CD8-positive, alpha-beta memory T cell (primary cell): ENCODE measurements at regions of chr6 and their contacts with region 1.

Region 1: GRCh38 chr6:44265007-44265721 is at the start of gene NFKBIE:
- DNase-seq: peak; percentile 93 to 97 (median 96)
- H3K4me3 ChIP-seq: peak within 1 kb of the TSS; percentile 86
- H3K4me3 Mint-ChIP-seq: peak within 1 kb of the TSS; percentile 88 to 96 (median 91)
- H3K27ac ChIP-seq: peak within 1 kb of the TSS; percentile 93
- H3K27ac Mint-ChIP-seq: peak within 1 kb of the TSS; percentile 78 to 99 (median 98)
- H3K4me1 ChIP-seq: peaks cover 30% of the 10 kb centered on the region
- H3K4me1 Mint-ChIP-seq: peaks cover 45 to 51% (median 47%) of the 10 kb centered on the region in 3 donors
- H3K27me3 ChIP-seq: peaks cover 21% of the 10 kb centered on the region
- H3K27me3 Mint-ChIP-seq: peaks cover 17% of the 10 kb centered on the region in 2 donors
- total RNA-seq, gene NFKBIE: 33.1 to 34.3 TPM

Region 2: DNA sequence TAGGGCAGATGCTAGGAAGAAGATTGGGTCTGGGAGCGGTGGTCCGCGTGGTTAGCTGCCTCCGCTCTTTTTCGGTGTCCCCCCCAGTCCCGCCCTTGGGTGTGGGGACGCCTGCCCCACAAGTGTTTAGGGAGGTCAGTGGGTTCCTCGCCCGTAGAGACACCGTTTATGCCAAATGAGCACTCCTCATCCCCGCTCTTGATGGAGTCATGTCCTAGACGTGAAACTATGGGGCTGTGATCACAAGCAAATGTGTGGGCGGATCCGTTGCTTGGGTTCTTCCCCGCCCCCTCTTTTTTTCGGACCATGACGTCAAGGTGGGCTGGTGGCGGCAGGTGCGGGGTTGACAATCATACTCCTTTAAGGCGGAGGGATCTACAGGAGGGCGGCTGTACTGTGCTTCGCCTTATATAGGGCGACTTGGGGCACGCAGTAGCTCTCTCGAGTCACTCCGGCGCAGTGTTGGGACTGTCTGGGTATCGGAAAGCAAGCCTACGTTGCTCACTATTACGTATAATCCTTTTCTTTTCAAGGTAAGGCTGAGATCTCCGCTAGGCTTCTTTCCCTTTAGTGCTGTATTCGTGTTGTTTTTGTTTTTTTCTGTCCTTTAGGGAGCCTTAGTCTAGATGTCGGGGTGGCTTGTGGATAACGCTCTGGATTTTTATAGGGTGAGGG is 18.4 kb before region 1 on chr6 and contains the start of gene HSP90AB1:
- CTCF ChIA-PET with region 1: interaction called, 8 read pairs
- POLR2A ChIA-PET with region 1: interaction called, 23 read pairs
- DNase-seq: peak; percentile 87 to 98 (median 95)
- H3K4me3 ChIP-seq: peak within 1 kb of the TSS; percentile 98
- H3K4me3 Mint-ChIP-seq: peak within 1 kb of the TSS; percentile 91 to 99 (median 98)
- H3K27ac ChIP-seq: peak within 1 kb of the TSS; percentile 98
- H3K27ac Mint-ChIP-seq: peak within 1 kb of the TSS; percentile 91 to 99 (median 98)
- H3K4me1 ChIP-seq: peaks cover 23% of the 10 kb centered on the region
- H3K4me1 Mint-ChIP-seq: peaks cover 37 to 51% (median 47%) of the 10 kb centered on the region in 3 donors
- H3K27me3 ChIP-seq: no peaks in the 10 kb centered on the region
- H3K27me3 Mint-ChIP-seq: peaks cover 0 to 7% of the 10 kb centered on the region in 2 donors
- total RNA-seq, gene HSP90AB1: 2,387 to 2,400 TPM

Region 3: GRCh38 chr6:44304282-44305199 is 39.4 kb after region 1 on chr6:
- CTCF ChIA-PET with region 1: interaction called, 36 read pairs
- POLR2A ChIA-PET with region 1: no interaction called
- DNase-seq: peak; percentile 18 to 67 (median 36)
- H3K4me3 ChIP-seq: no peak overlapping the region
- H3K4me3 Mint-ChIP-seq: no peak overlapping the region
- H3K27ac ChIP-seq: no peak overlapping the region
- H3K27ac Mint-ChIP-seq: no peak overlapping the region
- H3K4me1 ChIP-seq: no peaks in the 10 kb centered on the region
- H3K4me1 Mint-ChIP-seq: no peaks in the 10 kb centered on the region
- H3K27me3 ChIP-seq: no peaks in the 10 kb centered on the region
- H3K27me3 Mint-ChIP-seq: no peaks in the 10 kb centered on the region

Region 4: GRCh38 chr6:44338228-44339122 is 73.3 kb after region 1 on chr6:
- CTCF ChIA-PET with region 1: interaction called, 41 read pairs
- POLR2A ChIA-PET with region 1: no interaction called
- DNase-seq: peak; percentile 37 to 75 (median 46)
- H3K4me3 ChIP-seq: no peak overlapping the region
- H3K4me3 Mint-ChIP-seq: no peak overlapping the region
- H3K27ac ChIP-seq: no peak overlapping the region
- H3K27ac Mint-ChIP-seq: no peak overlapping the region
- H3K4me1 ChIP-seq: no peaks in the 10 kb centered on the region
- H3K4me1 Mint-ChIP-seq: no peaks in the 10 kb centered on the region
- H3K27me3 ChIP-seq: peaks cover 11% of the 10 kb centered on the region
- H3K27me3 Mint-ChIP-seq: peaks cover 18 to 28% of the 10 kb centered on the region in 2 donors

Region 5: DNA sequence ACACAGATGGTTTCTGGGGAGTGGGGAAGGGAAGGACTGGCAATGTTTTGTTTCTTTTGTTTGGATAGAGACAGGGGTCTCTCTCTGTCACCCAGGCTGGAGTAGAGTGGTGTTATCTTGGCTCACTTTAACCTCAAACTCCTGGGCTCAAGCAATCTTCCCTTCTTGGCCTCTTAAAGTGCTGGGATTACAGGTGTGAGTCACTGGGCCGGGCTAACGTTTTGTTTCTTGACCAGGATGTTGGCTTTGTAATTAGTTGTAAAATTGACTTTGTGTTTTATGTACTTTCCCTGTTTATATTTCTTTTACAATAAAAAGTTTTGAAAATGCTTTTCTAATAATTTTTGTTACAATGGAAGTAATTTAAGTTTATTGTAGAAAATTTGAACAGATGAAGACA is 88.2 kb after region 1 on chr6:
- CTCF ChIA-PET with region 1: no interaction called
- POLR2A ChIA-PET with region 1: no interaction called
- DNase-seq: no peak
- H3K4me3 ChIP-seq: no peak overlapping the region
- H3K4me3 Mint-ChIP-seq: no peak overlapping the region
- H3K27ac ChIP-seq: no peak overlapping the region
- H3K27ac Mint-ChIP-seq: no peak overlapping the region
- H3K4me1 ChIP-seq: no peaks in the 10 kb centered on the region
- H3K4me1 Mint-ChIP-seq: no peaks in the 10 kb centered on the region
- H3K27me3 ChIP-seq: no peaks in the 10 kb centered on the region
- H3K27me3 Mint-ChIP-seq: peaks cover 6 to 13% of the 10 kb centered on the region in 2 donors